ENCODE measurements at regions of chr15 and their contacts with region 1.

Region 1: GRCh38 chr15:85044251-85044853 is 62.7 kb downstream of the PDE8A start:
- DNase-seq: peak in 2 of 6 donors; percentile 53 to 60
- ATAC-seq: peak; percentile 78 to 92 (median 87)
- H3K4me3 ChIP-seq: no peak overlapping the region
- H3K27ac ChIP-seq: no peak overlapping the region
- H3K4me1 ChIP-seq: peaks cover 0 to 9% (median 3%) of the 10 kb centered on the region in 3 donors
- H3K27me3 ChIP-seq: no peaks in the 10 kb centered on the region
- CTCF ChIP-seq: peak in 3 of 4 donors; percentile 26 to 44 (median 38)

Region 2: DNA sequence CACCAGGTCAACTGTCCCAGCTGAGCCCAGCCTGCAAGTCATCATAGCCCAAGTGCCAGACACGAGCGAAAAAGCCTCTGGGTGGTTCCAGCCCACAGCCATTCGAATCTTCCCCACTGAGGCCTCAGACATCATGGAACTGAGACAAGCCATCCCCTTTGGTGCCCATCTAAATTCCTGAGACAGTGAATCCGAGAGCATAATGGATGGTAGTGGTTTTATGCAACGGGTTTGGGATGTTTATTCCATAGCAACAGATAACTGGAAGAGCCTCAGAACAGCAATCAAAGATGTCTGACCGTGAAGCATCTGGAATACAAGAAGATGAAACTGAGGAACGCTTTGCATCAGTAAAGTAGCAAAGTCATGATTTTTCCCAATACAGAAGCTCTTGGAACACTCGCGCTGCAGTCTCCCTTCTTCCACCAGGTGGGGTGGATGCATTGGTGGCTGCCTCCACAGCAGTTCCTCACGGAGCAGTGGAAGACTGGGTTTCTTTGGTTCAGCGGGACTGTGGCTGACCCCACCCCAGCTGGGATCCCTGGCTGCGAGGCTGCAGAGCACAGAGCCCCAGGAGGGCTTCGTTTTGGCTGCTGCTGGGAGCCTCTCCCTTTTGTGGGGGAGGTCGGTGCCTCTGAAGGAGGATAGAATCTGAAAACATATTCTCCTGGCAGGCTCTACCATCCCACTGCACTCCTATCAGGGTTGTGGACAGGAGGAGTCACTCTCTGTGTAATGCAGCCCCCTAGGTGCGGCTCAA is 89.1 kb before region 1 on chr15:
- intact Hi-C with region 1: loop called in 2 of 3 experiments (anchors 2 to 10 kb)
- DNase-seq: peak; percentile 59 to 84 (median 75)
- ATAC-seq: peak; percentile 94 to 100 (median 98)
- H3K4me3 ChIP-seq: peak overlapping the region in 1 of 4 donors; percentile 23
- H3K27ac ChIP-seq: no peak overlapping the region
- H3K4me1 ChIP-seq: no peaks in the 10 kb centered on the region
- H3K27me3 ChIP-seq: no peaks in the 10 kb centered on the region
- CTCF ChIP-seq: peak; percentile 53 to 83 (median 72)